ENCODE measurements at regions of chr7 and their contacts with region 1.

Region 1: GRCh38 chr7:25720427-25720826 is 431.6 kb upstream of the NFE2L3 start:
- DNase-seq: peak; percentile 39
- H3K4me3 ChIP-seq: no peak overlapping the region
- H3K27ac ChIP-seq: no peak overlapping the region
- H3K4me1 ChIP-seq: no peaks in the 10 kb centered on the region
- H3K27me3 ChIP-seq: no peaks in the 10 kb centered on the region
- CTCF ChIP-seq: no peak; the same call in 1 of the 2 replicates
- EP300 ChIP-seq: no peak
- RAD21 ChIP-seq: peak; percentile 59

Region 2: GRCh38 chr7:25707768-25708620 is 12.4 kb before region 1 on chr7:
- CTCF ChIA-PET with region 1: interaction called, 15 read pairs
- POLR2A ChIA-PET with region 1: interaction called, 3 read pairs
- DNase-seq: peak; percentile 53
- H3K4me3 ChIP-seq: no peak overlapping the region
- H3K27ac ChIP-seq: no peak overlapping the region
- H3K4me1 ChIP-seq: peaks cover 0 to 5% of the 10 kb centered on the region in 2 experiments; a peak in 1 of 4 replicates
- H3K27me3 ChIP-seq: no peaks in the 10 kb centered on the region
- CTCF ChIP-seq: no peak
- EP300 ChIP-seq: no peak
- RAD21 ChIP-seq: peak; percentile 11; the same call in 1 of the 2 replicates